ENCODE measurements at regions of chr7 and their contacts with region 1.

Region 1: DNA sequence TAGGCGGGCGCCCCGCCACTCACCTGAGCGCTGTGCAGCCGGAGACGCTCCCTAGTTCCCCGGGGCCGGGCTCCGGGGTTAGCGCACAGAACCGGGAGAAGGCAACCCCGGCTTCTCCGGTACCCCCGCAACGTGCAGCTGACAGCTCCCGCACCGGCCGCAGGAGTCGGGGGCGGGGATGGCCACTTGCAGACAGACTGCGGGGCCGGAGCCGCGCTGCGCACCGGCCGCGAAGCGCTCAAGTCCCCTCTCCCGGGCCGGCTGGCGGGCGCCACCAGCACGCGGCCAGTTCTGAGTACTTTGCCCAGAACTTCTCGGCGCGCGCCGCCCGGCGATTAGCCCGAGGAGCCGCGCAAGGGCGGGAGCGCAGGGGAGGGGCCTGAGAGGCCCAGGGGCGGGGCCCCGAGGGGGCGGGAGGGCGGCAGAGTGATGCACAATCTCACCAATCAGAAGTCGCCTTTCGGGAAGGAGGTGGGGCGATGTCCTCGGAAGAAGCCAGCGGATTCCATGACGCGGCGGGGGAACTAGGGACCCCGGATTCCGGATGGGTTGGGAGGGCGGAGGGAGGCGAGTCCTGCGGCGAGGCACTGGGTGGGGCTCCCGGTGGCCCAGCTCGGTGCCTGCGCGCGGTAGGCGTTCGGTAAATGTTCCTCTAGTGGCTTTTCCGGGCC is at the start of gene OSBPL3:
- DNase-seq: peak; percentile 97
- H3K4me3 Mint-ChIP-seq: peak within 1 kb of the TSS; percentile 93
- H3K27ac Mint-ChIP-seq: peak within 1 kb of the TSS; percentile 92
- H3K4me1 Mint-ChIP-seq: peaks cover 51% of the 10 kb centered on the region
- H3K27me3 Mint-ChIP-seq: no peaks in the 10 kb centered on the region
- total RNA-seq, gene OSBPL3: 41.2 to 45.1 TPM

Region 2: GRCh38 chr7:24757353-24758275 is 222.4 kb before region 1 on chr7 and contains the start of gene GSDME:
- CTCF ChIA-PET with region 1: no interaction called
- POLR2A ChIA-PET with region 1: no interaction called
- intact Hi-C with region 1: loop called (anchors 2 kb)
- DNase-seq: peak; percentile 35
- H3K4me3 Mint-ChIP-seq: peak within 1 kb of the TSS; percentile 78
- H3K27ac Mint-ChIP-seq: no peak within 1 kb of the TSS
- H3K4me1 Mint-ChIP-seq: peaks cover 30% of the 10 kb centered on the region
- H3K27me3 Mint-ChIP-seq: peaks cover 45% of the 10 kb centered on the region
- total RNA-seq, gene GSDME: 4.7 TPM

Region 3: DNA sequence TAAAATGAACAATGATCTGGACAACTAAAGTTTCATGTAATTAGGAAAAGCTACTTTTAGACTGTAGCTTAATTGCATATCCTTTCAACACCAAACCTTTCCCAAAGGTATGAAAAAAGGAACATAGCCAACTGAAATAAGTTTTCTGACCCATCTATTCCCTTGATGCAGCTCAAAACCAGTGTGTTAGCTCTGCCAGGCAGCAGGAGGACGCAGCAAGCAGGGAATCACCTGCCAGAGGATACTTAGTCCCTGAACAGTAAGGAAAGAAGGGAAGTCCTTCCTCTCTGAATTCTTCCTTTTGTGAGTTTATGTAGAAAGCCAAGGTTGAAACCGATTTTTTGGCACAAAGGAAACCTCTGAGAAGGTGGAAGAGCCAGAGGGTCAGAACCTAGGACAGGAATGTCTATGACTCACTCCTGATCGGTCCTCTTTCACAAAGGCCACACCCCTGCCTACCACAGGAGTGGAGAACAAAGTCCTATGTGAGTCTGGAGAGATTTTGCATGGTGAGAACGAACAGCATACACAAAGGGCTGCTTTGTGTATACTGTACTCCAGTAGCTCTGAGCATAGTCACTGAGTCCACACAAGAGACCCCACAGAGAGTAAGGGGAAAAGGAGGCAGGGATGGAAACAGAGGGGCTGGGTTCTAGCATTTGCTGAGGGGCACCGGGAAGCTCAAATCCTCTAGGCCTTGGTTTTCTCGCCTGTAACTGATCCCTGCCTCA is 153.9 kb before region 1 on chr7:
- CTCF ChIA-PET with region 1: interaction called, 86 read pairs
- POLR2A ChIA-PET with region 1: interaction called, 41 read pairs
- intact Hi-C with region 1: loop called (anchors 1 kb)
- DNase-seq: no peak
- H3K4me3 Mint-ChIP-seq: peak overlapping the region; percentile 28
- H3K27ac Mint-ChIP-seq: peak overlapping the region; percentile 43
- H3K4me1 Mint-ChIP-seq: peaks cover 67% of the 10 kb centered on the region
- H3K27me3 Mint-ChIP-seq: no peaks in the 10 kb centered on the region

Region 4: GRCh38 chr7:24882989-24883621 is 96.9 kb before region 1 on chr7:
- CTCF ChIA-PET with region 1: interaction called, 22 read pairs
- POLR2A ChIA-PET with region 1: interaction called, 28 read pairs
- intact Hi-C with region 1: no loop called
- DNase-seq: peak; percentile 75
- H3K4me3 Mint-ChIP-seq: no peak overlapping the region
- H3K27ac Mint-ChIP-seq: peak overlapping the region; percentile 57
- H3K4me1 Mint-ChIP-seq: peaks cover 78% of the 10 kb centered on the region
- H3K27me3 Mint-ChIP-seq: no peaks in the 10 kb centered on the region

Region 5: DNA sequence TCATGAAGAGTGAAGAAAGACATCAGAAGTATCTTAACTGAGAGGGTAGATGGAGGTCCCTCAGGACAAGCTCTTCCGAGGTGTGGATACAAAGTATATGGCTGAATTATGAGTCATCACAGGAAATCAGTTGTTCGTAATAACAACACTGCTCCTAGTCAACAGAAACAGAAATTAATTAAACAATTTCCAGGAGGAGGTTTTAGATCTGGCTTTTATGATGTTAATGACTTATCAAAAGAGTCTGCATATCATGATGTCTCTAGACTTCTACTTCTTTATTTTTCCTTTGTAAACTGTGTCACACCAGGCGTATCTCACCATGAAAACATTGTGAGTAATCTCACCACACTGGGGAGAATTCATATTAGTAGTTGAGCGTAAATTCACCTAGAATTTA is 31.3 kb before region 1 on chr7:
- CTCF ChIA-PET with region 1: interaction called, 30 read pairs
- POLR2A ChIA-PET with region 1: interaction called, 3 read pairs
- intact Hi-C with region 1: no loop called
- DNase-seq: no peak
- H3K4me3 Mint-ChIP-seq: no peak overlapping the region
- H3K27ac Mint-ChIP-seq: peak overlapping the region; percentile 3
- H3K4me1 Mint-ChIP-seq: peaks cover 59% of the 10 kb centered on the region
- H3K27me3 Mint-ChIP-seq: no peaks in the 10 kb centered on the region

Region 6: DNA sequence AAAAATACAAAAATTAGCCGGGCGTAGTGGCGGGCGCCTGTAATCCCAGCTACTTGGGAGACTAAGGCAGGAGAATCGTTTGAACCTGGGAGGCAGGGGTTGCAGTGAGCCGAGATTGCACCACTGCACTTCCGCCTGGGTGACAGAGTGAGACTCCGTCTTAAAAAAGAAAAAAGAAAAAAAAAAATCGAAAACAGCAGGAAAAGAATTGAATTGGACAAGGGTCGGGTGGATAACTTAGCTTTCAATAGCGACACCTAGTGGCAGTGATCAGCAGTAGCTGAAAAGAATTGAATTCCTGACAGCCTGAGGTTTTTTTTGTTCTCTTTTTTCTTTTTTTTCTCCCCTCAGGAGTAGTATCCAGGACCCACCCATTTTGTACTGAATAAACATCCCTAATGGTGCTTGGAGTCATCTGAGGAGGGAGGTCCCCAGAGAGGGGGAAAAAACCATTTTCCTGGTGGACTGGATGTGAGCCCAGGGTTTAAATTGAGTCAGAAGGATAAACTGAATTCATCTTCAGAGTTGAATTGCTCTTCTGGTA is 90.0 kb after region 1 on chr7:
- CTCF ChIA-PET with region 1: interaction called, 43 read pairs
- POLR2A ChIA-PET with region 1: interaction called, 5 read pairs
- intact Hi-C with region 1: loop called (anchors 1 kb)
- DNase-seq: peak; percentile 45
- H3K4me3 Mint-ChIP-seq: no peak overlapping the region
- H3K27ac Mint-ChIP-seq: no peak overlapping the region
- H3K4me1 Mint-ChIP-seq: peaks cover 26% of the 10 kb centered on the region
- H3K27me3 Mint-ChIP-seq: no peaks in the 10 kb centered on the region

Region 7: GRCh38 chr7:25125137-25125946 is 145.3 kb after region 1 on chr7 and contains the start of gene CYCS:
- CTCF ChIA-PET with region 1: no interaction called
- POLR2A ChIA-PET with region 1: interaction called, 7 read pairs
- intact Hi-C with region 1: loop called (anchors 1 kb)
- DNase-seq: peak; percentile 100
- H3K4me3 Mint-ChIP-seq: peak within 1 kb of the TSS; percentile 100
- H3K27ac Mint-ChIP-seq: peak within 1 kb of the TSS; percentile 100
- H3K4me1 Mint-ChIP-seq: peaks cover 24% of the 10 kb centered on the region
- H3K27me3 Mint-ChIP-seq: no peaks in the 10 kb centered on the region
- total RNA-seq, gene CYCS: 199 to 207 TPM